Activated B cell treated with CpG ODN at 0.5 μM for 24 hours (primary cell): ENCODE measurements at regions of chr3 and their contacts with region 1.

Region 1: DNA sequence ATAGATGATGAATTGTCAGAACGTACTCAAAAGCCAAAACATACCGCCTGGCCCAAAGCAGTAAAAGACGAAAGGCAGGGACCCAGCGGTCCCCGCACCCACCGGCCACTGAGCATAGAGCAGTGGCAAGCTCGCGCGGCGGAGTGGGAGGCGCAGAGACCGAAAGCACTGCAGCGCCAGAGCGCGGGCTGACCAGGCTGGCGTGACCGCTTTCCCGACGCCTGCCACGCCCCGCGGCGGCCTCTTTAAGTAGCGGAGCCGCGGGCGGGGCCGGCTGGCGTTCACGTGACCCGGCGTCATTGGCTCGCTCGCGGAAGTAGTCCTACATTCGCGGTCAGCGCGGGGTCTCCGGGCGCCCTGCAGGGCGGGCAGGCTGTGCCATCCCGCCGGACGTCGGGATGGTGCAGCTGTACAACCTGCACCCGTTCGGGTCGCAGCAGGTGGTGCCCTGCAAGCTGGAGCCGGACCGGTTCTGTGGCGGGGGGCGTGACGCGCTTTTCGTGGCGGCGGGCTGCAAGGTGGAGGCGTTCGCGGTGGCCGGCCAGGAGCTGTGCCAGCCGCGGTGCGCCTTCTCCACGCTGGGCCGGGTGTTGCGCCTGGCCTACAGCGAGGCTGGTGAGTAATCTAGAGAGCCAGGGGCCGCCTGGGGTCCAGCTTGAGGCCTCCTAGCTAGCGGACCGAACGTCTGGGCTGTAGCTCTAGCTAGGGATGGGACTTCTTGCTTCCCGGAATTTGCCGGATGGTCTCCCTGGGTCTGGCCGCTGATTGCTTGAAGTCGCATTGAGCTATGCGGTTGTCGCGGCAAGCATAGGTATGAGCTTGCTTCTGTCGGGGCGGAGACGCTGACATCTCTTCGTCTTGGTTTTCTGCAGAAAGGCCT is at the start of gene HPS3:
- DNase-seq: peak; percentile 90
- ATAC-seq: peak; percentile 95
- H3K4me3 Mint-ChIP-seq: peak within 1 kb of the TSS; percentile 98
- H3K27ac Mint-ChIP-seq: peak within 1 kb of the TSS; percentile 89
- H3K4me1 Mint-ChIP-seq: peaks cover 48% of the 10 kb centered on the region
- H3K27me3 Mint-ChIP-seq: no peaks in the 10 kb centered on the region
- CTCF ChIP-seq: no peak
- total RNA-seq, gene HPS3: 30.1 and 30.5 TPM in 2 replicates

Region 2: GRCh38 chr3:148861277-148861869 is 268.2 kb before region 1 on chr3:
- CTCF ChIA-PET with region 1: no interaction called
- POLR2A ChIA-PET with region 1: no interaction called
- intact Hi-C with region 1: loop called (anchors 10 kb)
- DNase-seq: no peak
- ATAC-seq: peak; percentile 31
- H3K4me3 Mint-ChIP-seq: no peak overlapping the region
- H3K27ac Mint-ChIP-seq: no peak overlapping the region
- H3K4me1 Mint-ChIP-seq: no peaks in the 10 kb centered on the region
- H3K27me3 Mint-ChIP-seq: peaks cover 9% of the 10 kb centered on the region
- CTCF ChIP-seq: peak; percentile 70

Region 3: GRCh38 chr3:149086232-149086988 is 43.2 kb before region 1 on chr3 and contains the start of gene HLTF:
- CTCF ChIA-PET with region 1: no interaction called
- POLR2A ChIA-PET with region 1: interaction called, 5 read pairs
- intact Hi-C with region 1: loop called (anchors 1 kb)
- DNase-seq: peak; percentile 80
- ATAC-seq: peak; percentile 99
- H3K4me3 Mint-ChIP-seq: peak within 1 kb of the TSS; percentile 99
- H3K27ac Mint-ChIP-seq: peak within 1 kb of the TSS; percentile 87
- H3K4me1 Mint-ChIP-seq: peaks cover 32% of the 10 kb centered on the region
- H3K27me3 Mint-ChIP-seq: no peaks in the 10 kb centered on the region
- CTCF ChIP-seq: no peak
- total RNA-seq, gene HLTF: 16.4 and 18.3 TPM in 2 replicates

Region 4: DNA sequence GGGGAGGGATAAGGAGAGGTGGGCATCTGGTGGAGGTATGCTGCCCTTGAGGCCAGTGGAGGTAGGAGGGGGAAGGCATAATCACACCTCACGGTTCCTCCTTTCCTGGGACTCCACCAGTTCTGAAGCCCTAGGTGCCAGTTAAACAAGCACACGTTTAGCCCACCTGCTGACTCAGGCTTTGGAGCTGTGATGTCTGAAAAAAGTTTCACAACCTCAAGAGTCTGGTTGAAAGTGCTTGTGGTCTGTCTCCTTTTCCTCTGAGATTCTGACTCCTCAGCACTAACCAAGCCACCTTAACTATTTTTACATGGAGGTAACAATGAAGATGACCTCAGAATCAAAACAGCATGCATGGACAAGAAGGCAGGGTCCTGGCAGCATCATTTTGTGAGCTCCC is 22.9 kb after region 1 on chr3:
- CTCF ChIA-PET with region 1: no interaction called
- POLR2A ChIA-PET with region 1: interaction called, 45 read pairs
- intact Hi-C with region 1: no loop called
- DNase-seq: no peak
- ATAC-seq: peak; percentile 58
- H3K4me3 Mint-ChIP-seq: no peak overlapping the region
- H3K27ac Mint-ChIP-seq: peak overlapping the region; percentile 50
- H3K4me1 Mint-ChIP-seq: peaks cover 25% of the 10 kb centered on the region
- H3K27me3 Mint-ChIP-seq: no peaks in the 10 kb centered on the region
- CTCF ChIP-seq: no peak

Region 5: DNA sequence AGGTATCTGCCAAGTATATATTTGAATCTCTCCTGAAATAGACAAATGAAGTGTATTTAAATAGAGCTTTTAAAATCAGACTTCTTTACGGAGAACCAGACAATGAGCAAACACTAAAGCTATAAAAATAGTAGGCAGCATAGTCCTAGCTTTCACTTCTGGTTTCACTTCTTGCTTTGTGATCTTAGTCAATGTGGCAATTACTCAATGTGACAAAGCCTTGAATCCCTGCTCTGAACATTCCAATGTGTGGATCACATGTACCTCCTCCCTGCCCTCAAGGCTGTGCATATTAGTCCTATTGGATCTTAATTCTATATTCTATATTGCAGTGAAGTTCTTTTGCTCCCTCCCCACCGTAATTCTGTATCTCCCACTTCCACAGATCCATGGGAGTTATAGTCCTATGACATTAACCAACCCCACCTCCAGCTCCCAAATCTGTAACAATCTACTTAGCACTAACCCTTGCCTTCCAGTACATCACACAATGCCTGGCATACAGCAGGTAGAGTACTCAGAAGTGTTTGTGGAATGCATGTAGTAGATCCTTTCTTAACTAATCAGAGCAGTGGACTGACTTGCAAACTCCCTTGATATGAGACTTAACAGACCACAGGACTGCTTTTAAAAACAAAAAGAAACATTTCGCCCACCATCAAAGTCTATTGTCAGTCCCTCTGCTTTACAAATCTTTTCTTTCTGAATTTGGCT is 116.3 kb after region 1 on chr3:
- CTCF ChIA-PET with region 1: interaction called, 3 read pairs
- POLR2A ChIA-PET with region 1: interaction called, 12 read pairs
- intact Hi-C with region 1: loop called (anchors 1 kb)
- DNase-seq: no peak
- ATAC-seq: peak; percentile 61
- H3K4me3 Mint-ChIP-seq: peak overlapping the region; percentile 57
- H3K27ac Mint-ChIP-seq: peak overlapping the region; percentile 69
- H3K4me1 Mint-ChIP-seq: peaks cover 68% of the 10 kb centered on the region
- H3K27me3 Mint-ChIP-seq: no peaks in the 10 kb centered on the region
- CTCF ChIP-seq: no peak

Region 6: DNA sequence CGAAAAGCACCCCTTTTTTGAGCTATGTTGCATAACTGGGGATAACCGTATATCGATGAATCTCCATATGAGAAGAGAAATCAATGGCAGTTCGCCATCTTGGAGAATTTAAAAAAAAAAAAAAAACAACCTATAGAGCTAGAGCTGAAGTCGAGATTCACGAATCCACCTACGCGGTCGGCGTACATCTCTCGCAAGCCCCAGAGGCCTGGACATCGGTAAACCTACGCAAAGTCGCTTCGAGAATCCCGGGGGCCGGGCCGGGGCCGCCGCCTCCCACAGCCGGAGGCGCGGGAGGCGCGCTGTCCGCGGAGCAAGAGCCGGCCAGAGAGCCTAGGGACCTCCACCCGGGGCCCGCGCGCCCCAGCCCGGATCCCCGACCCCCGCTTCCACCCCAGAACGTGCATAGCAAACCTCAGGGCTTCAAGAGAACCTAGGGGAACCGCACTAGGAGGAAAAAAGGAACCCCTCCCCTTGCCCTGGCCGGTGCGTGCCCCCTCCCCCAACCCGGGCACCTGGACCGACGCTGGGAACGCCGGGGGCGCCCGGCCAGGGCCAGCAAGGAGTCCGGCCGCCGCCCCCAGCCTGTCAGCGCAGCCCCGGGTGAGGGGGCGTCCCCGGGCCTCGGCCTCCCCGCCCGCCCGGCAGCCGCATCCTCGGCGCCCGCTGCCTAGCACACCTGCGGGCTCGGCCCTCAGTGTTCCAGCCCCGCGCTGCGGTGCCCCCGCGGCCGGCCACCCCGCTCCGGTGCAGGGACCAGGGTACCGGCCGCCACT is 840.6 kb after region 1 on chr3:
- CTCF ChIA-PET with region 1: no interaction called
- POLR2A ChIA-PET with region 1: no interaction called
- intact Hi-C with region 1: loop called (anchors 1 kb)
- DNase-seq: peak; percentile 76
- ATAC-seq: peak; percentile 76
- H3K4me3 Mint-ChIP-seq: peak overlapping the region; percentile 90
- H3K27ac Mint-ChIP-seq: peak overlapping the region; percentile 53
- H3K4me1 Mint-ChIP-seq: peaks cover 23% of the 10 kb centered on the region
- H3K27me3 Mint-ChIP-seq: peaks cover 15% of the 10 kb centered on the region
- CTCF ChIP-seq: no peak